Sigmoid colon (tissue), 7 donors: ENCODE measurements at regions of chr1 and their contacts with region 1.

Region 1: DNA sequence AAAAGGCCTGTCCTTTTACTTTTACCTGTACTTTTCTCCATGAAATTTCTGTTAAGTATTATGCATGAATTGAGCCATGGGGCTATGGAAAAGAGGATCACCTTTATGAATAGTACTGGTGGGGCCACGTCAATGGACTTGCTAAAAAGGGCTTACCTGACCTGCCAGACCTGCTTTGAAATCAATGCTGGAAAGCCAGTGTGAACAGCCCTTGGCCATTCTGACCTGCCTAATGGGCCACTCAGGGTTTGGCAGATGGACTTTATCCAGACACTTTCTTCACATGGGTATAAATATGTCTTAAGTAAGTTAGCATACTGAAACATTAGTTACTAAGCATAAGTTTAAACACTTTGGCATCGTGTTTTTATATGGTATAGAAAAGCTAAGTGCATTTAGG is 8.3 kb upstream of the GUK1 start:
- DNase-seq: no peak
- H3K4me3 ChIP-seq: no peak overlapping the region
- H3K27ac ChIP-seq: no peak overlapping the region
- H3K4me1 ChIP-seq: peaks cover 0 to 8% (median 3%) of the 10 kb centered on the region in 4 donors
- H3K27me3 ChIP-seq: peaks cover 0 to 26% (median 0%) of the 10 kb centered on the region in 3 donors
- CTCF ChIP-seq: no peak
- EP300 ChIP-seq: no peak
- POLR2A ChIP-seq: no peak

Region 2: DNA sequence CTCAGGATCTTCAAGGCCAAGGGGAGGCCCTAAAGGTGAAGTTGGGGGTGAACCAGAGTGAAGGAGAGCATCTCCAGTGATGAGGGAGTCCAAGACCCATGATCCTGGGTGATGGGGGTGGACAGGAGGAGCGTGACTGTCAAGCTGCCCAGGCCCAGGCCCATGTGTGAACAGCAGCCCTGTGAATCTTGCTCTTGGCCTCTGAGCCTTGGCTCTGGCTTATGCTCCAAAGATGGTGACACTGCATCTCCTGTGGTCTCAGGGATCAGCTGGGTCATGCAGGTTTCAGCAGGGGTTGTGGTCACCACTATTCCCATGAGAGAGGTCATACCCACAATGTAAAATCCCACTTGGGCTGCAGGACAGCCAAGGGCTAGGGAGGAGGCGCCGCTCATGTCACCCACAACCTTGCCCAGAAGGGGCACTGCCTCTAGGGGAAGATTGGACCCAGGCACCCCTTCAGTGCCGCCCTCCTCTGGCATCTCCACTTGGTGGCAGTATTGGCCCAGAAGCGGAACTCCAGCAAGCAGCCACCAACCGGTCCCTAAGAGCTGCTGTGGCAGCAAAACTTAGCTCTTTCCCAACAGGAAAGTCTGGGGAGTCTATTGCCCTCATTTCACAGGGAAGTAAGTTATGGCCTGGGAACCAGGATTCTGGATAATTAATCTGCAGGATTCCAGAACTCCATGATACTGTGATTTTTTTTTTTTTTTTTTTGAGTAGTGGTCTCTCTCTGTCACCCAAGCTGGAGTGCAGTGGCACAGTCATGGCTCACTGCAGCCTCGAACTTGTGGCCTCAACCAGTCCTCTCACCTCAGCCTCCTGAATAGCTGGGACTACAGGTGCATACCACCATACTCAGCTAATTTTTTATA is 132.5 kb before region 1 on chr1:
- intact Hi-C with region 1: no loop called
- DNase-seq: peak; percentile 62
- H3K4me3 ChIP-seq: no peak overlapping the region
- H3K27ac ChIP-seq: no peak overlapping the region
- H3K4me1 ChIP-seq: peaks cover 0 to 1% (median 0%) of the 10 kb centered on the region in 4 donors
- H3K27me3 ChIP-seq: peaks cover 5 to 28% (median 10%) of the 10 kb centered on the region in 3 donors
- CTCF ChIP-seq: peak in 1 of 4 experiments; percentile 48
- EP300 ChIP-seq: no peak
- POLR2A ChIP-seq: no peak

Region 3: DNA sequence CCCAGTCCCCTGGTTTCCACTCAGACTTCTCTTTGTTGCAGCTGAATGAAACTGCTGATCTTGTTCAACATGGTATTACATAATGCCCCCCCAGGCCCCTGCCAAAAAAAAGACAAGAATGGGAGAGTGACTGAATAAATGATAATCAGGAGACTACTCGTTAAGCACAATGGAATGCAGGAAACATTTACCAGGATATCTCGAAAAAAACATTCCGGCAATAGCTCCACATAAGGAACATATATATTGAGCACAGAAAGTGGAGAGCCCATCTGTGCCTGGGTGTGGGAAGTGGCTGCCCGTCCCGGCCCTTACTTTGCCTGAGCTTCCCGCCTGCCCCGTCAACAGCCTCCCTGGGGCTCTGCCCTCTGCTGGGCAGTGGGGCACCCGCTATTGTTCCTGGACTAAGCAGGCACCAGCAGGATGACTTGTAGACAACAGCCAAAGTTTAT is 261.5 kb after region 1 on chr1:
- intact Hi-C with region 1: loop called (anchors 5 kb)
- DNase-seq: peak; percentile 69
- H3K4me3 ChIP-seq: no peak overlapping the region
- H3K27ac ChIP-seq: peak overlapping the region in 1 of 4 donors; percentile 6
- H3K4me1 ChIP-seq: peaks cover 0 to 9% (median 0%) of the 10 kb centered on the region in 4 donors
- H3K27me3 ChIP-seq: no peaks in the 10 kb centered on the region
- CTCF ChIP-seq: peak in 2 of 4 experiments; percentile 24 to 26
- EP300 ChIP-seq: no peak
- POLR2A ChIP-seq: no peak